ENCODE measurements at regions of chr17 and their contacts with region 1.

Region 1: GRCh38 chr17:36856903-36857381 is 80.3 kb upstream of the LHX1 start:
- DNase-seq: no peak
- H3K4me3 ChIP-seq: no peak overlapping the region
- H3K27ac ChIP-seq: no peak overlapping the region
- H3K4me1 ChIP-seq: peaks cover 42% of the 10 kb centered on the region
- H3K27me3 ChIP-seq: no peaks in the 10 kb centered on the region
- CTCF ChIP-seq: no peak

Region 2: DNA sequence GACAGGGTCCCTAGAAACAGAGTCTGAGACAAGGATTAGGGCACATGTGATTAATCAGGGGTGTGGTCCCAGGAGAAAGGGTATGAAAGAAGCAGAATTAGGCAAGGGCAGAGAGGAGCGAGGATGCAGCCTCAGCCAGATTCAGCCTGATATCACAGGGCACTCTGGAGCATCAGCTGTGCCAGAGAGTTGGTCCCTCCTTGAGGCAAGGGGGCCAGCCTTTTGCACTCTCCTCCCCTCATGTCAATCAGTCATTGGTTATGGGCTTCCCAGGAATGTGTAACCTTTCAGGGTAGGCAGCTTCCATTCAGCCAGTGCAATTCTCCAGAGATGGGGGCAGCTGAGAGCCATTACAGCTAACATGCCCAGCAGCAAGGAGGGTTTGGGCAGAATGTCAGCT is 72.3 kb before region 1 on chr17:
- CTCF ChIA-PET with region 1: no interaction called
- dilution Hi-C with region 1: loop called (anchors 5 kb)
- in situ Hi-C with region 1: no loop called
- intact Hi-C with region 1: no loop called
- DNase-seq: no peak
- H3K4me3 ChIP-seq: no peak overlapping the region
- H3K27ac ChIP-seq: no peak overlapping the region
- H3K4me1 ChIP-seq: no peaks in the 10 kb centered on the region
- H3K27me3 ChIP-seq: no peaks in the 10 kb centered on the region
- CTCF ChIP-seq: no peak

Region 3: DNA sequence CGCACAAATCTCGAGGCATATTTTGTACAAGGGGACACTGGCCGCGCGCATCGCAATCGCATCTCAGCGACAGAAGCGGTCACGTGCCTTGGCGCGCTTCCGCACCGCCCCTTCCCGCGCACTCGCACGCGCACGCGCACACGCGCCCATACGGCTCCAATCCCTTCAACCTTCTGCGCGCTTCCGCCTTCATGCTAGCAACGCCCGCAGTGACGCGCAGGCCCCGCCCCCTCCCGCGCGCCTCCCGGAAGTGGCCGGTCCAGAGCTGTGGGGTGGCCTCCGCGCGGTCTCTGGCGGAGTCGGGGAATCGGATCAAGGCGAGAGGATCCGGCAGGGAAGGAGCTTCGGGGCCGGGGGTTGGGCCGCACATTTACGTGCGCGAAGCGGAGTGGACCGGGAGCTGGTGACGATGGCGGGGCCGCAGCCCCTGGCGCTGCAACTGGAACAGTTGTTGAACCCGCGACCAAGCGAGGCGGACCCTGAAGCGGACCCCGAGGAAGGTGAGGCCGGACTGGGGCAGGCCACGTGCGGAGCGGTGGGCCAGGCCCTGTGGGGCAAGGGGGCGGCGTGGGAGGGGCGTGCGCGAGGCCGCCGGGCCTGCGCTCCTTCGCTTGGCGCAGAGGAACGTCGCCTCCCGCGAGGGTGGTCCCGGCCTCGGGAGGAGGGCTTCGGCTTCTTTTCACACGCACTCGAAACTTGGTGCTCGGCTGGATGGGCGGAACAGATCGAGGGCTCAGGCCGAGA is 91.9 kb after region 1 on chr17 and contains the start of gene AATF:
- CTCF ChIA-PET with region 1: no interaction called
- dilution Hi-C with region 1: no loop called
- in situ Hi-C with region 1: no loop called
- intact Hi-C with region 1: loop called (anchors 2 kb)
- DNase-seq: peak; percentile 95
- H3K4me3 ChIP-seq: peak within 1 kb of the TSS; percentile 78 to 86 (median 78)
- H3K27ac ChIP-seq: peak within 1 kb of the TSS; percentile 74
- H3K4me1 ChIP-seq: peaks cover 18% of the 10 kb centered on the region
- H3K27me3 ChIP-seq: peaks cover 28% of the 10 kb centered on the region
- CTCF ChIP-seq: no peak
- total RNA-seq, gene AATF: 21.2 to 70.3 TPM

Region 4: DNA sequence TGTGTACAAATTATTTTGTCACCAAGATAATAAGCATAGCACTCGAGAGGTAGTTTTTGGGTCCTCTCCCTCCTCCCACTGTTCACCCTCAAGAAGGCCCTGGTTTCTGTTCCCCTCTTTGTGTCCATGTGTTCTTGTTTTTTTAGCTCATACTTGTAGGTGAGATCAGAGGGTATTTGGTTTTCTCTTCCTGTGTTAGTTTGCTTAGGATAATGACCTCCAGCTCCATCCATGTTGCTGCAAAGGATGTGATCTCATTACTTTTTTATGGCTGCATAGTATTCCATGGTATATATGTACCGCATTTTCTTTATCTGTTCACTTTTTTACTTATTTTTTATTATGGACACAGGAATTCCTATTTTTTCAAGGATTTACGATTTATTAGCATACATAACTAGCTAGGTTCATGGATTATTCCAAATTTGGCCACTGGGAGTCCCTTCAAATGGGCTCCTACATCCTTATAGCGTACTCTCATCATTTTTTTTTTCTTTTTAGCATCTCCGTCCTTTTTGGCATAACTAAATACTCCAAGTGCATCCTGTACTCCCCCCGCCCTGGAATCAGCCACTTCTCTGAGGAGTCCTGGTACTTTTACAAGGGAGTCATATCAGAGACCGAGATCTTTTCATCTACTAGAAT is 557.1 kb after region 1 on chr17:
- CTCF ChIA-PET with region 1: no interaction called
- dilution Hi-C with region 1: no loop called
- in situ Hi-C with region 1: no loop called
- intact Hi-C with region 1: no loop called
- DNase-seq: no peak
- H3K4me3 ChIP-seq: no peak overlapping the region
- H3K27ac ChIP-seq: no peak overlapping the region
- H3K4me1 ChIP-seq: no peaks in the 10 kb centered on the region
- H3K27me3 ChIP-seq: no peaks in the 10 kb centered on the region
- CTCF ChIP-seq: peak; percentile 29 to 32